ENCODE measurements at regions of chr3 and their contacts with region 1.

Region 1: DNA sequence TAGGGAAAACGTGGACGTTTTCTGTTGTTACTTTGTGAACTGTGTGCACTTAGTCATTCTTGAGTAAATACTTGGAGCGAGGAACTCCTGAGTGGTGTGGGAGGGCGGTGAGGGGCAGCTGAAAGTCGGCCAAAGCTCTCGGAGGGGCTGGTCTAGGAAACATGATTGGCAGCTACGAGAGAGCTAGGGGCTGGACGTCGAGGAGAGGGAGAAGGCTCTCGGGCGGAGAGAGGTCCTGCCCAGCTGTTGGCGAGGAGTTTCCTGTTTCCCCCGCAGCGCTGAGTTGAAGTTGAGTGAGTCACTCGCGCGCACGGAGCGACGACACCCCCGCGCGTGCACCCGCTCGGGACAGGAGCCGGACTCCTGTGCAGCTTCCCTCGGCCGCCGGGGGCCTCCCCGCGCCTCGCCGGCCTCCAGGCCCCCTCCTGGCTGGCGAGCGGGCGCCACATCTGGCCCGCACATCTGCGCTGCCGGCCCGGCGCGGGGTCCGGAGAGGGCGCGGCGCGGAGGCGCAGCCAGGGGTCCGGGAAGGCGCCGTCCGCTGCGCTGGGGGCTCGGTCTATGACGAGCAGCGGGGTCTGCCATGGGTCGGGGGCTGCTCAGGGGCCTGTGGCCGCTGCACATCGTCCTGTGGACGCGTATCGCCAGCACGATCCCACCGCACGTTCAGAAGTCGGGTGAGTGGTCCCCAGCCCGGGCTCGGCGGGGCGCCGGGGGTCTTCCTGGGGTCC is at the start of gene TGFBR2:
- DNase-seq: peak; percentile 68 to 89 (median 76)
- ATAC-seq: peak; percentile 62 to 70
- H3K4me3 Mint-ChIP-seq: peak within 1 kb of the TSS; percentile 77 to 100 (median 97)
- H3K27ac Mint-ChIP-seq: peak within 1 kb of the TSS; percentile 94 to 100 (median 98)
- H3K4me1 Mint-ChIP-seq: peaks cover 30 to 80% (median 54%) of the 10 kb centered on the region in 4 donors
- H3K27me3 Mint-ChIP-seq: no peaks in the 10 kb centered on the region
- polyA plus RNA-seq, gene TGFBR2: 128 to 226 (median 131) TPM

Region 2: GRCh38 chr3:30353711-30354467 is 252.6 kb before region 1 on chr3:
- POLR2A ChIA-PET with region 1: interaction called, 35 read pairs
- DNase-seq: peak; percentile 7 to 94 (median 72)
- ATAC-seq: peak; percentile 99 to 100
- H3K4me3 Mint-ChIP-seq: peak overlapping the region; percentile 39 to 81 (median 72)
- H3K27ac Mint-ChIP-seq: peak overlapping the region; percentile 59 to 96 (median 92)
- H3K4me1 Mint-ChIP-seq: peaks cover 47 to 87% (median 83%) of the 10 kb centered on the region in 4 donors
- H3K27me3 Mint-ChIP-seq: no peaks in the 10 kb centered on the region

Region 3: GRCh38 chr3:30393079-30393478 is 213.4 kb before region 1 on chr3:
- POLR2A ChIA-PET with region 1: no interaction called
- DNase-seq: no peak
- ATAC-seq: no peak
- H3K4me3 Mint-ChIP-seq: no peak overlapping the region
- H3K27ac Mint-ChIP-seq: peak overlapping the region in 1 of 10 donors; percentile 10
- H3K4me1 Mint-ChIP-seq: peaks cover 0 to 16% (median 0%) of the 10 kb centered on the region in 4 donors
- H3K27me3 Mint-ChIP-seq: no peaks in the 10 kb centered on the region

Region 4: DNA sequence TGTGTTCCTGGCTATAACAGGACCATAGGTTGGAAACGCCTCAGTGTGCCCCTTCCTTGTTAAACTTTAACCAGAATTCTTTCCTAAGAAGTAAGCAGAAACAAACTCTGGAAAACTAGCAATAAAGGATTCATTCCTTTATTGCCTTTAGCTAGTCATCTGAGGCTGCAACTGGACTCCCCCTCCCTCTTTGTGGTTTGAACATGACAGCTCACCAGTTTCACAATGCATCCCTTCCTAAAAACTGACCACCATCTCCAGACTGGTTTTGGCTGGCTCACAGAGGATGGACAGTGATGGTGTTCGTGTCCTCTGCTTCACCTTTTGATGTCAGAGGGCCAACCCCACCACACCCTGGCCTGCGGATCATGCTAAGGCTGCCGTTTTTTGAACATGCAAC is 28.0 kb before region 1 on chr3:
- POLR2A ChIA-PET with region 1: no interaction called
- DNase-seq: no peak
- ATAC-seq: no peak
- H3K4me3 Mint-ChIP-seq: no peak overlapping the region
- H3K27ac Mint-ChIP-seq: peak overlapping the region in 2 of 10 donors; percentile 7 to 33
- H3K4me1 Mint-ChIP-seq: peaks cover 4 to 21% (median 9%) of the 10 kb centered on the region in 4 donors
- H3K27me3 Mint-ChIP-seq: no peaks in the 10 kb centered on the region

Region 5: DNA sequence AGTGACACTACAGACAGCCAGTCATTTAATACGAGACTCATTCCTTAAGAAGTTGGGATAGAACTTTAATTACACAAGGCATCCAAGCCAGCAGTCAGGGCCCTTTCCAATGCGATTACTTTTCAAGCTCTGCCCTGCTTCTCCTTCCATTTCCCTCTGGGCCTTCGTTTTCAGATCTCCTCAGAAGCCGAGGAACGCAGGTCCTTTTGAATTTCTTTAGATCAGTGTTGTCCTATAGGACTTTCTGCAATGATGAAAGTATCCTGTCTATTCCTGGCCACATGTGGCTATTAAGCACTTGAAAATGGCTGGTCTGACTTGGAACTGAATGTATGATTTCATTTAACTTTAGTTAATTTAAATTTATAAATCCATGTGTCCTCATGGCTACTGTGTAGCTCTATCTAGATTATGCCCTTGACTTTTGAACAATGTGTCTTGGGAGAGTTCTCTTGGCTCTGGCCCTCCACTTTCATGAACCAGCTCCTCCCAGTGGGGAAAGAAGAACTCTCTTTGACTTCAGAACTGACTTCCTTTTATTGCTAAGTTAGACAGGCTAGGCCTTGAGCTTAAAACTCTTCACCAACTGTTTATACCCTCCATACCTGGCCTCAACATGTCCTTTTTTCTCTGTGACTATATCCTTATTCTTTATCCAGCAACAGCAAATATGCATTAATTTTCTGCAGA is 22.6 kb after region 1 on chr3:
- POLR2A ChIA-PET with region 1: interaction called, 215 read pairs
- DNase-seq: peak in 1 of 10 donors; percentile 48
- ATAC-seq: peak; percentile 7 to 22
- H3K4me3 Mint-ChIP-seq: peak overlapping the region; percentile 38 to 82 (median 76)
- H3K27ac Mint-ChIP-seq: peak overlapping the region; percentile 91 to 100 (median 96)
- H3K4me1 Mint-ChIP-seq: peaks cover 46 to 99% (median 87%) of the 10 kb centered on the region in 4 donors
- H3K27me3 Mint-ChIP-seq: no peaks in the 10 kb centered on the region

Region 6: DNA sequence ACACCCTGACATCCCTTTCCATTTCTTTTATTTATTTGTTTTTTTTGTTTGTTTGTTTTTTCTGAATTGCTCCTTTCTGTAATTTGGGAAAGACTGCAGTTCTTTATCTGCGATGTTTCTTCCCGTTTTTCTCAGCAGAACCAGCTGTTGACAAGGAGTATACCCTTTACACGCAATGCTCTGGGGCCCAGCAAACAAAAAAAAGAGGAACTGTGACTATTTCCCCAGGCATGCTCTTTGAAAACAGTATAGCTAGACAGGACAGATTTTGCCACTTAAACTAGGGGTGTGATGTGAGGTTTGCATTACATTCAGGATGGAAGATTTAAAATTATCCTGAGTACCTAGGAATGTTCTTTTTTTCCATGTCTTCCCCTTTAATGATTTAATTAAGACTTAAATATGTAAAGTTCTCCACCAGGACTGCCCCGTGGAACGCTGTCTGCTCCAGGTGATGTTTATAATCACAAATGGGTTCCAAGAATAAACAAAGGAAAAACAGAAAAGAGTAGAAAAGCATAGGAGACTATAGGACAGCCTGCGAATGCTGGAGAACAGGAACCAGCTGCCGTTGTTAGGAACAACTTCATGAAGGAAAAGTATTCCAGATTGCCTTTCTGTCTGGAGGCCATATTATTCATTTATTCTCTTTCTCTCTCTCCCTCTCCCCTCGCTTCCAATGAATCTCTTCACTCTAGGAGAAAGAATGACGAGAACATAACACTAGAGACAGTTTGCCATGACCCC is 43.3 kb after region 1 on chr3:
- POLR2A ChIA-PET with region 1: interaction called, 315 read pairs
- DNase-seq: no peak
- ATAC-seq: no peak
- H3K4me3 Mint-ChIP-seq: peak overlapping the region; percentile 6 to 72 (median 60)
- H3K27ac Mint-ChIP-seq: peak overlapping the region; percentile 71 to 100 (median 98)
- H3K4me1 Mint-ChIP-seq: peaks cover 48 to 98% (median 97%) of the 10 kb centered on the region in 4 donors
- H3K27me3 Mint-ChIP-seq: no peaks in the 10 kb centered on the region

Region 7: DNA sequence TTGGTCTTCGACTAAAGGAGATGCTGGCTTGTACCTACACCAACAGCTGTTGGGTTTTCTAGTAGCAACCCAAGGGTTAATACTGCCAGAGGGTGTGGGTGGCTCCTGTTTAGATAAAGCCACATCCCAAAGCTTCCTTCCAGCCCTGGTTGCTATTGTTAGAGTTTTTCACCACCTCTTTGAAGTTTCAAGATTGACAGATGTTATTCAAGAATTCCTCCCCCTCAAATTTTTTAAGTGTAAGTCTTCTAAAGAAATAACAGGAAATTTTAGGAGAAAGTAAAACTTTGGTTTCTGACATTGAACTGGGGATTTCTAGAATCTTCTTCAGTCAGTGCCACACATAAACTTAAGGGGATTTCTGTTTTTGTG is 60.8 kb after region 1 on chr3:
- POLR2A ChIA-PET with region 1: interaction called, 29 read pairs
- DNase-seq: peak in 7 of 10 donors; percentile 37 to 67 (median 48)
- ATAC-seq: peak; percentile 37 to 57
- H3K4me3 Mint-ChIP-seq: peak overlapping the region; percentile 46 to 73 (median 64)
- H3K27ac Mint-ChIP-seq: peak overlapping the region; percentile 65 to 100 (median 90)
- H3K4me1 Mint-ChIP-seq: peaks cover 53 to 99% (median 95%) of the 10 kb centered on the region in 4 donors
- H3K27me3 Mint-ChIP-seq: no peaks in the 10 kb centered on the region

Region 8: DNA sequence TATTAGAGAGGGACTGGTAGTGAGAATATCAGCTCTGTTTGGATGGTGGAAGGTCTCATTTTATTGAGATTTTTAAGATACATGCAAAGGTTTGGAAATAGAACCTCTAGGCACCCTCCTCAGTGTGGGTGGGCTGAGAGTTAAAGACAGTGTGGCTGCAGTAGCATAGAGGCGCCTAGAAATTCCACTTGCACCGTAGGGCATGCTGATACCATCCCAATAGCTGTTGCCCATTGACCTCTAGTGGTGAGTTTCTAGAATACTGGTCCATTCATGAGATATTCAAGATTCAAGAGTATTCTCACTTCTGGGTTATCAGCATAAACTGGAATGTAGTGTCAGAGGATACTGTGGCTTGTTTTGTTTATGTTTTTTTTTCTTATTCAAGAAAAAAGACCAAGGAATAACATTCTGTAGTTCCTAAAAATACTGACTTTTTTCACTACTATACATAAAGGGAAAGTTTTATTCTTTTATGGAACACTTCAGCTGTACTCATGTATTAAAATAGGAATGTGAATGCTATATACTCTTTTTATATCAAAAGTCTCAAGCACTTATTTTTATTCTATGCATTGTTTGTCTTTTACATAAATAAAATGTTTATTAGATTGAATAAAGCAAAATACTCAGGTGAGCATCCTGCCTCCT is 87.1 kb after region 1 on chr3:
- POLR2A ChIA-PET with region 1: interaction called, 32 read pairs
- DNase-seq: peak in 9 of 10 donors; percentile 25 to 75 (median 62)
- ATAC-seq: peak; percentile 75 to 87
- H3K4me3 Mint-ChIP-seq: peak overlapping the region in 6 of 10 donors; percentile 10 to 70 (median 42)
- H3K27ac Mint-ChIP-seq: peak overlapping the region; percentile 4 to 100 (median 89)
- H3K4me1 Mint-ChIP-seq: peaks cover 39 to 93% (median 85%) of the 10 kb centered on the region in 4 donors
- H3K27me3 Mint-ChIP-seq: no peaks in the 10 kb centered on the region

Region 9: DNA sequence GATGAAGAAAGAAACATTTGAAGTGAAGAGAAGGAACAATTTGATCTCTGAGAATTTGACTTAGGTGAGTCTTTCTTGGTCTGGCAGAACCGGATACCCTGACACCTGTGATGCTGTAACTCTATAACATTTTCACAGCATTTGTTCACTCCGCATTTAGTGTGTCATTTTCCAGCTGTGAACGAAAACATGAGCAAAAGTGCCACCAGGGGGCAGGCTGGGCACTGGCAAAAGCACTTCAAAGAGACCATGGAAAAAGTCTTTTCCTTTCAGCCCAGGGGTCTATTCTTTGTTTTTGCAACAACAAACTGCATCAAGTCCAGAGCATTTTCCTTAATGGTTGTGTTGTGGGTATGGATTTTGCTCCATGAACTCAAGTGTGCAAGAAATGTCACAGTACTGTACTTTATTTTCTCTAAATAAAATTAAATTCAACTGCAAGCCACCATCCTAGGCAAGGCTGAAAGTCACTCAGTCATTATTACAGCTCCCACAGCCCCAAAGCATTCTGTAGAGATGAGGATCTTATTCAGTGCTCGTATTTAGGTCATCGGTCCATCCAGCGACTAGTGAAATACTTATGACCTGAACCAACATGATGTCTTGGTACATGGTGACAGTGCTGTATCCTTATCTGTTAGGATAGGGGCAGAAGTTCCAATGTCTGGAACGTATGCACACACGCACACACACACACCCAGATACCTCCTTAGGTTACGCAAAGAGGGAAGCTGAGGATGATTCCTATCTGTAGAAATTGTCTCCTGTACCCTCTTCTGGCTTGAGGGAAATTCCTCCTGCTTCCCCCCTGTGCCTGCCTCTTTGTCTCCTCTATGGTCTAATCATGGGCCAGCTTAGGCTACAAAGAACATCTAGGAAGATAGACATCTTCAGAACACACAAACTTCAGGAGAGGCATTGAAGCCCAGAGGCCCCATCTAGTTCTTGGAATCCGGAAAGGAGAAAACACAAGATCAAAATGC is 162.5 kb after region 1 on chr3:
- POLR2A ChIA-PET with region 1: no interaction called
- DNase-seq: peak; percentile 45 to 80 (median 62)
- ATAC-seq: peak in 1 of 2 donors; percentile 53
- H3K4me3 Mint-ChIP-seq: no peak overlapping the region
- H3K27ac Mint-ChIP-seq: peak overlapping the region in 1 of 10 donors; percentile 33
- H3K4me1 Mint-ChIP-seq: peaks cover 0 to 10% (median 2%) of the 10 kb centered on the region in 4 donors
- H3K27me3 Mint-ChIP-seq: peaks cover 0 to 10% (median 5%) of the 10 kb centered on the region in 5 donors

Measured in naive thymus-derived CD8-positive, alpha-beta T cell (primary cell).